Gastrocnemius medialis (tissue), 4 donors: ENCODE measurements at regions of chr3 and their contacts with region 1.

Region 1: DNA sequence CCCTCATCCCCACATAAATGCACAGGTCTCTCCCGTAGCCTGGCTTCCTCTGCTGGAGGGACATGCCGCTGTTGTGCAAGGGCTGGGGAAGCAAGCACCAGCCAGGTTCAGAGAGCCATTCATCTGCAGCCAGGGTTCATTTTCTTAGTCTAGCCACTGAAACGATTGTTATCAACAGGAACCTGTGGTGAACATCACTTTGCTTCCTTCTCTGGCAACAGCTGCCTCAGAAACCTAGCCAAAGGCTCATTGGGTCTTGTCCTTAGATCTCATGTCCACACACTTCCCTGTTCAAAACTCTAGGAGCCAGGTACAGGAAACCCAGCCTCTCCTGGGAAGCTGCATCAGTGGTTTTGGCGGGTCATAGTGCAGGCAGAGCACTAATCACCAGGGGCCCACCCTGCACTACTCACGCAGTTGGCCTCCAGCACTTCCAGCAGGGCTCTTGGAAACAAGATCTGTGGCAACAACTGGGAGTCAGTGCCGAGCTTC is 47.0 kb downstream of the OXNAD1 start:
- DNase-seq: peak; percentile 24 to 67
- ATAC-seq: peak; percentile 78 to 88
- H3K4me3 ChIP-seq: no peak overlapping the region
- H3K27ac ChIP-seq: peak overlapping the region; percentile 59 to 74 (median 70)
- H3K4me1 ChIP-seq: peaks cover 20 to 25% of the 10 kb centered on the region in 2 donors
- H3K27me3 ChIP-seq: no peaks in the 10 kb centered on the region
- CTCF ChIP-seq: no peak
- POLR2A ChIP-seq: no peak

Region 2: DNA sequence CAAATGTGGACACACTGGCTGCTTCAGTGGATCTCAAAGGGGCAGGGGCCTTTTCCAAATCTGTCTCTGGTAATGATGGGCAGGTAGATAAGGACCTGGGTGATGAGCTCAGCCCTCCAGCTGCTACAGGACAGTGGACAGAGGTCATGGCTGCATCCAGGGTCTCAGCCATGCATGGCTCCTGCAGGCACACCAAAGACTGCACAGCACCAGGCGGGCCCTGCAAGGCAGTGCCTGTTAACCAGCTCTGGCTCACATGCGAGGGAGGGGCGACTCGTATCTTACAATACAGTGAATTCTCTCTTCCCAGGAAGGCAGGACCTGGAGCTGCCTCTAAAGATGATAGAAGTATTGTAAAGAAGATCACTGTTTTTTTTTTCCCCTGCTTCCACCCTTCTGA is 11.7 kb after region 1 on chr3:
- in situ Hi-C with region 1: no loop called
- intact Hi-C with region 1: loop called (anchors 1 kb)
- DNase-seq: no peak
- ATAC-seq: no peak
- H3K4me3 ChIP-seq: no peak overlapping the region
- H3K27ac ChIP-seq: no peak overlapping the region
- H3K4me1 ChIP-seq: peaks cover 3% of the 10 kb centered on the region in 2 donors
- H3K27me3 ChIP-seq: no peaks in the 10 kb centered on the region
- CTCF ChIP-seq: no peak
- POLR2A ChIP-seq: no peak

Region 3: GRCh38 chr3:16370872-16371740 is 59.1 kb after region 1 on chr3:
- in situ Hi-C with region 1: loop called in 1 of 4 experiments (anchors 10 kb)
- intact Hi-C with region 1: loop called (anchors 5 kb)
- DNase-seq: no peak
- ATAC-seq: peak; percentile 40 to 58
- H3K4me3 ChIP-seq: no peak overlapping the region
- H3K27ac ChIP-seq: peak overlapping the region; percentile 19 to 65 (median 56)
- H3K4me1 ChIP-seq: peaks cover 46 to 51% of the 10 kb centered on the region in 2 donors
- H3K27me3 ChIP-seq: no peaks in the 10 kb centered on the region
- CTCF ChIP-seq: no peak
- POLR2A ChIP-seq: peak in 1 of 2 donors; percentile 8

Region 4: GRCh38 chr3:16378920-16379319 is 66.9 kb after region 1 on chr3:
- in situ Hi-C with region 1: loop called in 1 of 4 experiments (anchors 10 kb)
- intact Hi-C with region 1: loop called (anchors 5 kb)
- DNase-seq: no peak
- ATAC-seq: no peak
- H3K4me3 ChIP-seq: no peak overlapping the region
- H3K27ac ChIP-seq: no peak overlapping the region
- H3K4me1 ChIP-seq: peaks cover 20 to 24% of the 10 kb centered on the region in 2 donors
- H3K27me3 ChIP-seq: no peaks in the 10 kb centered on the region
- CTCF ChIP-seq: no peak
- POLR2A ChIP-seq: no peak